Activated T-helper 1 cell treated with anti-CD3 and anti-CD28 coated beads, Interleukin-12 subunit alpha, Interleukin-12 subunit beta, Interleukin-2, Interleukin-4 antibody, amounts not matched to agents 30 ng/mL and 10 ng/mL and 1 ng/mL, durations not matched to agents 14 hours and 24 hours and 36 hours (primary cell): ENCODE measurements at regions of chr21 and their contacts with region 1.

Region 1: GRCh38 chr21:30710499-30710898 is 8.1 kb downstream of the KRTAP21-3 start:
- DNase-seq: no peak
- H3K4me3 Mint-ChIP-seq: no peak overlapping the region
- H3K27ac Mint-ChIP-seq: peak overlapping the region; percentile 95
- H3K4me1 Mint-ChIP-seq: peaks cover 17% of the 10 kb centered on the region
- H3K27me3 Mint-ChIP-seq: no peaks in the 10 kb centered on the region

Region 2: DNA sequence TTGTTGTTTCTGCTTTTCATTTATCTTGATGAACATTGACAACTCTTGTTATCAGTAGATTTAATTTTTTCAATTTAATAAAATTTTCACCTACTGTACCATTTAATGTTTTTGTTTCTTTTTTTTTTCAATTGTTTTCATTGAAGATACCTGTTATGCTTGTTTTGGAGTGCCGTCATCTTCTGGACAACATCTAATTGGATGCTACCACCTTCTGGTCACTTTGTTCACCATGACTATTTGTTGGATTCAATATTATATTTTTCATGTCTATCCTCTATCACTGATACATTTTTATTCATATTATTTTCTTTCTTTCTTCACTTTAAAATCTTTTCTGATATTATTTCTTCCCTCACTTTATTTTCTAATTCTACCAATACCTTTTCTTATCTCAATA is 22.5 kb after region 1 on chr21:
- intact Hi-C with region 1: loop called (anchors 2 kb)
- DNase-seq: no peak
- H3K4me3 Mint-ChIP-seq: no peak overlapping the region
- H3K27ac Mint-ChIP-seq: no peak overlapping the region
- H3K4me1 Mint-ChIP-seq: no peaks in the 10 kb centered on the region
- H3K27me3 Mint-ChIP-seq: peaks cover 16% of the 10 kb centered on the region